WTC11 (cell line): ENCODE measurements at regions of chr14 and their contacts with region 1.

Region 1: DNA sequence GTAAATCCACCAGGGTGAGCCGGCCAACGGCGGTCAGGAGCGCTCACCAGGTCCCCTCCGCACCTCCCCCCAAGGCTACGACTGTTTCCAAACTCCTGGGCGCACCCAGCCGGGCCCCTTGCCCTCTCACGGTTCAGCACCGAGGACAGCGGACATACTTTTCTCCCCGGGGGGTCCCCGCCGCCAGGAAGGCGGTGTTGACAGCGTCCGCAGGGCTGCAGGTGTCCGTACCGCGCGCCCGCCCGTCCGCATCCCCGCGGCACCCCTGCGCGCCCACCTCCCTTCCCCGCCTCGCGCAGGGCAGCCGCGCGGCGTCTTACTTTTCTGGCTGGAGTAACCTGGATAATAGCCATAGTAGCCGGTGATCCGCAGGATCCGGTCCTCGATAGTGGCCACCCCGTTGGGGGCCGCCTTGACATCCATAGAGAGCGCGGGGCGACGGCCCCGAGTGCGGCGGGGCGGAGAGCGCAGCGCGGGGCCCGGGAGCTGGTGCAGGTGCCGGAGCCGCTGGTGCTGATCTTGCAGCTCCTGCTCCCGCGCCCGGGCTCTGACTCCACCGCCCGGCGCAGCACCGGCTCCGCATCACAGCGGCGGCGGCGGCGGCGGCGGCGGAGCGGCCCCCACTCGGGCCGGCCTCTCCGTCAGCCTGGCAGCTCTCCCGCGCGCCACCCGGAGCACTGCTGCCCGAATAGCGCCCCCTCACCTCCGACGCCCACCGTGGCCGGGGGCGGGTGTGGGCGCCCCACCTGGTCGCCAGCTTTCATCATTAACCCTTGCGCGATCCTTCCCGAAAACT is at the start of gene SLC35F4:
- DNase-seq: peak; percentile 91
- ATAC-seq: peak; percentile 89
- H3K4me3 Mint-ChIP-seq: peak within 1 kb of the TSS; percentile 75
- H3K27ac Mint-ChIP-seq: no peak within 1 kb of the TSS
- H3K4me1 Mint-ChIP-seq: peaks cover 21% of the 10 kb centered on the region
- H3K27me3 Mint-ChIP-seq: peaks cover 37% of the 10 kb centered on the region
- CTCF ChIP-seq: no peak
- total RNA-seq, gene SLC35F4: not detected in 3 replicates

Region 2: DNA sequence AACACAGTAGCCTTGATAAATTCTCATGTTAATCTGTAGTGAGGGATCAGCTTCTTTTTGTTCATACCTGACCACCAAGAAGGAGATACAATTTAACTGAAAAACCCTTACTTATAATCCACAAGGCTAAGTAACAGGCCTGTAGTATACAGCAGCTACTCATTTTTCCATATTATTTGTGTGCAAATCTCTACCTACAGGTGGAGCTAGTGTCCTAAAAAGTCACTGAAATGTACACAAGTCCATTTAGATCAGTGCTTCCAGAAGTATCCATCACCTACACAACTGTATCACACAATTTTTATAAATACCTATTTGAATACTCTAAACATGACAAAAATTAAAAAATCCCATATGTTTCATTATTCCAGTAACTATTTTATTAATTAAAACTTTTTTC is 172.9 kb before region 1 on chr14:
- CTCF ChIA-PET with region 1: interaction called, 20 read pairs
- POLR2A ChIA-PET with region 1: no interaction called
- DNase-seq: no peak
- ATAC-seq: peak; percentile 46; the same call in 1 of the 2 replicates
- H3K4me3 Mint-ChIP-seq: no peak overlapping the region
- H3K27ac Mint-ChIP-seq: no peak overlapping the region
- H3K4me1 Mint-ChIP-seq: peaks cover 4% of the 10 kb centered on the region
- H3K27me3 Mint-ChIP-seq: no peaks in the 10 kb centered on the region
- CTCF ChIP-seq: peak; percentile 16; the same call in 1 of the 2 replicates

Region 3: GRCh38 chr14:57847096-57847495 is 18.5 kb before region 1 on chr14:
- CTCF ChIA-PET with region 1: no interaction called
- POLR2A ChIA-PET with region 1: no interaction called
- DNase-seq: no peak
- ATAC-seq: no peak
- H3K4me3 Mint-ChIP-seq: no peak overlapping the region
- H3K27ac Mint-ChIP-seq: no peak overlapping the region
- H3K4me1 Mint-ChIP-seq: no peaks in the 10 kb centered on the region
- H3K27me3 Mint-ChIP-seq: no peaks in the 10 kb centered on the region
- CTCF ChIP-seq: no peak